WTC11 (cell line): ENCODE measurements at regions of chr13 and their contacts with region 1.

Region 1: GRCh38 chr13:24228852-24229458 is 68.4 kb downstream of the SPATA13 start:
- DNase-seq: peak; percentile 22
- ATAC-seq: no peak
- H3K4me3 Mint-ChIP-seq: no peak overlapping the region
- H3K27ac Mint-ChIP-seq: no peak overlapping the region
- H3K4me1 Mint-ChIP-seq: peaks cover 48% of the 10 kb centered on the region
- H3K27me3 Mint-ChIP-seq: no peaks in the 10 kb centered on the region
- CTCF ChIP-seq: peak; percentile 63; the same call in 1 of the 2 replicates

Region 2: GRCh38 chr13:23960566-23961156 is 268.3 kb before region 1 on chr13:
- CTCF ChIA-PET with region 1: interaction called, 16 read pairs
- POLR2A ChIA-PET with region 1: no interaction called
- DNase-seq: no peak
- ATAC-seq: peak; percentile 71
- H3K4me3 Mint-ChIP-seq: no peak overlapping the region
- H3K27ac Mint-ChIP-seq: no peak overlapping the region
- H3K4me1 Mint-ChIP-seq: peaks cover 7% of the 10 kb centered on the region
- H3K27me3 Mint-ChIP-seq: no peaks in the 10 kb centered on the region
- CTCF ChIP-seq: peak; percentile 53

Region 3: GRCh38 chr13:24005755-24006281 is 223.1 kb before region 1 on chr13:
- CTCF ChIA-PET with region 1: interaction called, 22 read pairs
- POLR2A ChIA-PET with region 1: no interaction called
- DNase-seq: no peak
- ATAC-seq: no peak
- H3K4me3 Mint-ChIP-seq: no peak overlapping the region
- H3K27ac Mint-ChIP-seq: no peak overlapping the region; the same call in 1 of the 2 replicates
- H3K4me1 Mint-ChIP-seq: peaks cover 21% of the 10 kb centered on the region
- H3K27me3 Mint-ChIP-seq: no peaks in the 10 kb centered on the region; the same call in 1 of the 2 replicates
- CTCF ChIP-seq: no peak

Region 4: GRCh38 chr13:24020375-24020830 is 208.6 kb before region 1 on chr13:
- CTCF ChIA-PET with region 1: interaction called, 37 read pairs
- POLR2A ChIA-PET with region 1: no interaction called
- DNase-seq: peak; percentile 53
- ATAC-seq: 0 out of 2 replicates have a peak, but pooled peaks have one; percentile 44
- H3K4me3 Mint-ChIP-seq: no peak overlapping the region
- H3K27ac Mint-ChIP-seq: no peak overlapping the region
- H3K4me1 Mint-ChIP-seq: no peaks in the 10 kb centered on the region
- H3K27me3 Mint-ChIP-seq: no peaks in the 10 kb centered on the region; the same call in 1 of the 2 replicates
- CTCF ChIP-seq: peak; percentile 29; the same call in 1 of the 2 replicates

Region 5: DNA sequence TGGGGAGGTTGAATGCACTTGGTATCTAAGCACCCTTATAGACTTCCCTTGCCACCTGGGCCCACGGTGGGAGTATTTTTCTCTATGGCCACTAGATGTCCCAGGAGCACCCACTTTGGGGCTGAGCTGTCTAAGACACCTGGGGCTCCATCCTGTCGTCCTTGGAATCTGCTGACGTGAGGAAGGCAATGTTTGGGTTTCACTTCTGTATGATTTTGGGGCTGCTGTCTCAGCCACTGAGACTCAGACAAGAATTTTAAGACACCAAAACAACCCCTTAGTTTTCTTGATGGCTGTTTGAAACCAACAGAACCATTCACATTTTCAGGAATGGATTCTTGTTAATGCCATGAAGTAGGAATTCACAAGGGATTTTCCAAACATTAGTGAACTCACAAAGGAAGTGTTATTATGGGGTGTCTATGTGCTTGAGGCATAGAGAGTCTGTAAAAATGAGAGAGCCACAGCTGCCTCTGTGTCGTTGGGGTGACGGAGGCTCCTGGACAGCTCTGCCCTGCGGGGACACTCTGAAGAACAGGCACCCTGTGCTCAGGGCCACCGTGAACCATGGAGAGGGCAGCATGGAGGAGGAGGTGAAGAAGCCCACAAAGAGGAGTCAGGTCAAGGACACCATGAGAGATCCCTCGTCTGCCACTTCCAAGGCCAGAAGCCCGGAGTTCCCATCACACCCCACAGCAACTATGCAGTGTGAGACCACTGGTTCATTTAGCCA is 175.3 kb before region 1 on chr13:
- CTCF ChIA-PET with region 1: interaction called, 30 read pairs
- POLR2A ChIA-PET with region 1: no interaction called
- DNase-seq: peak; percentile 73
- ATAC-seq: peak; percentile 96
- H3K4me3 Mint-ChIP-seq: 0 out of 2 replicates have a peak overlapping the region, but pooled peaks have one; percentile 2
- H3K27ac Mint-ChIP-seq: peak overlapping the region; percentile 75; the same call in 1 of the 2 replicates
- H3K4me1 Mint-ChIP-seq: peaks cover 28% of the 10 kb centered on the region
- H3K27me3 Mint-ChIP-seq: no peaks in the 10 kb centered on the region
- CTCF ChIP-seq: peak; percentile 53

Region 6: DNA sequence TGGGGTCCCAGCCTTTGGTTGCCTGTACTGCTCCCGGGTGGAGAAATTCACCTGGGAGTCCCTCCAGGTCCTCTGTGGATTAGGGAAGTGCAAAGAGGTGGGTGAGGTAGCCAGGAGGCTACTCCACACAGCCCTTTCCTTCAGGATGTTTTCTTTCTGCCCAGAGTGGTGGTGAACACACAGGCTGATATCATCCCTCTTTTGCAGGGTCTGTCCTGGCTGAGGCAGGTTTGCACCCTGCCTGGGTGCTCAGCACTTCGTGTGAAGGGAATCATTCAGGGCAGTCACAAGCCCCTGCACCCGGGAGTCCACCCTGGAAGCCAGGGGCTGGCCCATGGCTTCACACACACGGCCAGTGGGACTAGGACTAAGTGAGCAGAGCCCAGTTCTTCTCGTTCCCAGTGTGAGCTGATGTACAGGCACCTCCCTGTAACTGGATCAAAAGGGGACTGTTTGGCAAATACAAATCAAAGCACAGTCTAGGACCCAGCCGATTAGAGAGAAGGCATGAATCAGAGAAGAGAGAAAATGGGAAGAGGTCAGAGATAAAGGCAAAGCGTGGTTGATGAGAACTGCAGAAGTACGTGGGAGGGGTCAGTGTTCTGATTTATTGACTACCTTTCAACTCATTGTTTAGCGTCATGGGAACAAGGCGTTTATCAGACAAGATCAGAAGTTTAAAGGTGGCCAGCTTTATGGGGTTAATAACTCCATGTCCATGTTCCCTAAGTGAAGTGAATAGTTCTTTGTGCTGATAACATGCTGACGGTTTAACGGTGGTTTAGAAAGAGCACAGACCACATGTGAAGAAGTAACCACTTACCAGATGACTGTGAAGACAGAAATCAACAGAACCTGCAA is 98.8 kb before region 1 on chr13:
- CTCF ChIA-PET with region 1: no interaction called
- POLR2A ChIA-PET with region 1: no interaction called
- DNase-seq: no peak
- ATAC-seq: no peak
- H3K4me3 Mint-ChIP-seq: no peak overlapping the region
- H3K27ac Mint-ChIP-seq: no peak overlapping the region
- H3K4me1 Mint-ChIP-seq: peaks cover 34% of the 10 kb centered on the region
- H3K27me3 Mint-ChIP-seq: no peaks in the 10 kb centered on the region; the same call in 1 of the 2 replicates
- CTCF ChIP-seq: no peak

Region 7: GRCh38 chr13:24160454-24161009 is 68.4 kb before region 1 on chr13 and contains the start of gene SPATA13:
- CTCF ChIA-PET with region 1: interaction called, 19 read pairs
- POLR2A ChIA-PET with region 1: no interaction called
- DNase-seq: peak; percentile 96
- ATAC-seq: peak; percentile 87
- H3K4me3 Mint-ChIP-seq: peak within 1 kb of the TSS; percentile 84
- H3K27ac Mint-ChIP-seq: no peak within 1 kb of the TSS
- H3K4me1 Mint-ChIP-seq: peaks cover 38% of the 10 kb centered on the region
- H3K27me3 Mint-ChIP-seq: peaks cover 9% of the 10 kb centered on the region
- CTCF ChIP-seq: no peak
- total RNA-seq, gene SPATA13: 22.1 to 29.0 TPM (median 23.1 TPM) in 3 replicates

Region 8: GRCh38 chr13:24203811-24204210 is 25.1 kb before region 1 on chr13:
- CTCF ChIA-PET with region 1: interaction called, 10 read pairs
- POLR2A ChIA-PET with region 1: no interaction called
- DNase-seq: no peak
- ATAC-seq: no peak
- H3K4me3 Mint-ChIP-seq: no peak overlapping the region
- H3K27ac Mint-ChIP-seq: no peak overlapping the region
- H3K4me1 Mint-ChIP-seq: peaks cover 21% of the 10 kb centered on the region
- H3K27me3 Mint-ChIP-seq: no peaks in the 10 kb centered on the region
- CTCF ChIP-seq: no peak